CD4-positive, alpha-beta memory T cell (primary cell): ENCODE measurements at regions of chr22 and their contacts with region 1.

Region 1: GRCh38 chr22:38097557-38098409 is 12.7 kb downstream of the BAIAP2L2 start:
- DNase-seq: no peak
- H3K4me3 ChIP-seq: no peak overlapping the region
- H3K4me3 Mint-ChIP-seq: no peak overlapping the region
- H3K27ac ChIP-seq: no peak overlapping the region
- H3K27ac Mint-ChIP-seq: no peak overlapping the region
- H3K4me1 ChIP-seq: no peaks in the 10 kb centered on the region
- H3K4me1 Mint-ChIP-seq: peaks cover 0 to 5% (median 2%) of the 10 kb centered on the region in 4 donors
- H3K27me3 ChIP-seq: no peaks in the 10 kb centered on the region
- H3K27me3 Mint-ChIP-seq: no peaks in the 10 kb centered on the region

Region 2: GRCh38 chr22:38114484-38115398 is 17.0 kb after region 1 on chr22:
- CTCF ChIA-PET with region 1: interaction called, 12 read pairs
- POLR2A ChIA-PET with region 1: no interaction called
- intact Hi-C with region 1: no loop called
- DNase-seq: peak; percentile 65 to 73 (median 70)
- H3K4me3 ChIP-seq: no peak overlapping the region
- H3K4me3 Mint-ChIP-seq: peak overlapping the region in 2 of 8 donors; percentile 57 to 74
- H3K27ac ChIP-seq: no peak overlapping the region
- H3K27ac Mint-ChIP-seq: peak overlapping the region in 4 of 7 donors; percentile 64 to 89 (median 83)
- H3K4me1 ChIP-seq: peaks cover 6% of the 10 kb centered on the region
- H3K4me1 Mint-ChIP-seq: peaks cover 2 to 5% (median 3%) of the 10 kb centered on the region in 4 donors
- H3K27me3 ChIP-seq: no peaks in the 10 kb centered on the region
- H3K27me3 Mint-ChIP-seq: no peaks in the 10 kb centered on the region